Dorsolateral prefrontal cortex (tissue), 120 donors: ENCODE measurements at regions of chr19 and their contacts with region 1.

Region 1: GRCh38 chr19:7497292-7497691 is 8.5 kb upstream of the PEX11G start:
- DNase-seq: peak in 1 of 10 donors; percentile 29
- H3K4me3 ChIP-seq: no peak overlapping the region
- H3K27ac ChIP-seq: peak overlapping the region in 50 of 59 donors; percentile 0 to 100 (median 91)
- H3K27me3 ChIP-seq: no peaks in the 10 kb centered on the region
- CTCF ChIP-seq: peak in 39 of 56 donors; percentile 17 to 61 (median 38)

Region 2: DNA sequence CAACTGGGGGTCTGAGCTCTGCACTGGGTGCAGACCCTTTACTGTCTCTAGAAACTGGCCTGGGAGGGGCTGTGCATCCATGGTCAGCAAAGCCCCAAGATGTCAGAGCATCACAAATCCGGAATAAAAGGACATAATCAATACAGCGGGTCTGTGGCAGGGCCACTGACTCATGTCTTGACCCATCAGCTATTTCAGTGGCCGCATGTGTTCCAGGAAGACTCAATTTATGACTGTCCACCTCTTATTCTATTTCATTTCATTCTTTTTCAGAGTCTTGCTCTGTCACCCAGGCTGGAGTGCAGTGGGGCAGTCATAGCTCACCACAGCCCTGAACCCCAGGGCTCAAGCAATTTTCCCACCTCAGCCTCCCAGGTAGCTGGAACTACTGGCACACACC is 61.7 kb before region 1 on chr19:
- intact Hi-C with region 1: loop called (anchors 5 kb)
- DNase-seq: no peak
- H3K4me3 ChIP-seq: no peak overlapping the region
- H3K27ac ChIP-seq: peak overlapping the region in 55 of 59 donors; percentile 6 to 96 (median 88)
- H3K27me3 ChIP-seq: no peaks in the 10 kb centered on the region
- CTCF ChIP-seq: no peak

Region 3: DNA sequence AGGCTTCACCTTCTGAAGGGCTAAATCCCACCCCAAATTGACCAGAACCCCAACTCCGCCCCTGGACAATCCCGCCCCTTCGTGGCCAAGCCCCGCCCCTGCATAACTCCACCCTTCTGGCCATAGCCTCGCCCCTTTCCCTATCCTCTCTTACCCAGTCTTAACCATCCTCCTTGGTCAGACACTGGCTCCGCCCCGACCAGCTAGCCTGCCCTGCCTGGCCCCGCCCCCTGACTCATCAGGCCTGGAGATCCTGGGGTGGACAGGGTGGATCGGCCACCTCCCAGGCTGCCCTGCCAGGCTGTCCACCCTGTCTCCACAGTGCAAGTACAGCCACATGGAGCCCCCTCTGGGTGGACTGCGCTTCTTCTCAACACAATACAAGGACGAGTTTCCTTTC is 10.6 kb after region 1 on chr19:
- intact Hi-C with region 1: no loop called
- DNase-seq: peak in 4 of 10 donors; percentile 23 to 78 (median 51)
- H3K4me3 ChIP-seq: no peak overlapping the region
- H3K27ac ChIP-seq: peak overlapping the region in 3 of 59 donors; percentile 43 to 48 (median 48)
- H3K27me3 ChIP-seq: peaks cover 0 to 4% (median 0%) of the 10 kb centered on the region in 45 donors
- CTCF ChIP-seq: no peak